BJ (cell line): ENCODE measurements at regions of chr10 and their contacts with region 1.

Region 1: DNA sequence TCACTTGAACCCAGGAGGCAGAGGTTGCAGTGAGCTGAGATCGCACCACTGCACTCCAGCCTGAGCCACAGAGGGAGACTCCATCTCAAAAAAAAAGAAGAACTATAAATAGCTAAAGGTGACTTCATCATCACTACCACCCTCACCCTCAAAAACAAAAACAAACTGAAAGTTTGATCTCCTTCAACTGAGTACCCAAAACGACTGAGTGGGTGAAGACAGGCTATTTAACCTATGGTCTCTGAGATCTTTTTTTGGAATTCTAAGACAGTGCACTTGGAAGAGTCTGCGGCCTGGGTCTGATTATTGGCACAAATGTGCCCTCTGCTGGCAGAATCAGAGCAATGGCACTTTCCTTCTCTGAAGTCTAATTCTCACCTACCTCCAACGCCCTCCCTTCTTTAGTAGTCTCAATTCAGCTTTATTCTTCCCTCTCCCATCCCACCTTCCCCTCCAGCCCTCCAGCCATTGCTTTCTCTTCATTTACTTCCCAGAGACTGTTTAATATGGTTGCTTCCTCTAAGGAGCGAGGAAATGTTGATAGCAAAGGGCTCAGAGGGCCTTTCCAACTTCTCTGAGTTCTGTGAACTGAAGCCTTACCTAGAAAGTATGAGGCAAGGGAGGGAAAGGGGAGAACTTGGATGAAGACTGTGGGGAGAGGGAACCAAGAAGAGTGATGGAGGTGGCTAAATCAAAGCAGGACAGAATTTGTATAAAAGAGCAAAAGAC is 2.9 kb upstream of the MYOZ1 start:
- DNase-seq: peak; percentile 15
- H3K4me3 ChIP-seq: no peak overlapping the region
- H3K27me3 ChIP-seq: no peaks in the 10 kb centered on the region; the same call in 1 of the 2 replicates
- CTCF ChIP-seq: peak; percentile 78

Region 2: DNA sequence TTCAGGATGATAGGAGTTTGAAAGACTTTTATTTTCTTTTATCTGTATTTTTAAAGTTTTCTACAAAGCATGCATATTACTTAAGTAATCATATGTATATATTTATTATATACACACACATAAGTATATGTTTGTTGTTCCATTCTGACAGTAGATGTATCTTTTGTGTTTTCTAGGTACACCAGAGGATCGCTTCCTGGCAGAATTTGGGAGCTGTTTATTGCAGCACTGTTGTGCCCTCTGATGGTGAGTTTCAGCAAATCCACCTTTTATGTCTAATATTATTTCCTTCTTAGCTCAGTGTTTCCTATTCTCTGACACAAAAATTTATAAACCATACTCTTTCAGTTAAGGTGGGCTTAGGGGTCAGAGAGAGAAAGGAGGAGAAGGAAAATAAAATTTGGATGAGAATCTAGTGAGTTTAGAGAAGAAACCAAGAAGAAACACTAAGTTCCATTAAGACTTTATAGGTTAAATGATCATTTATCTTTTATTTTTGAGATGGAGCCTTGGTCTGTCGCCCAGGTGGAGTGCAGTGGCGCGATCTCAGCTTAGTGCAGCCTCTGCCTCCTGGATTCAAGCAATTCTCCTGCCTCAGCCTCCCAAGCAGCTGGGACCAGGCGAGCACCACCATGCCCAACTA is 809.9 kb before region 1 on chr10:
- CTCF ChIA-PET with region 1: no interaction called
- POLR2A ChIA-PET with region 1: no interaction called
- DNase-seq: peak; percentile 4
- H3K4me3 ChIP-seq: no peak overlapping the region
- H3K27me3 ChIP-seq: no peaks in the 10 kb centered on the region
- CTCF ChIP-seq: peak; percentile 58

Region 3: GRCh38 chr10:73576178-73576889 is 67.8 kb before region 1 on chr10:
- CTCF ChIA-PET with region 1: interaction called, 7 read pairs
- POLR2A ChIA-PET with region 1: interaction called, 12 read pairs
- DNase-seq: peak; percentile 68
- H3K4me3 ChIP-seq: no peak overlapping the region
- H3K27me3 ChIP-seq: no peaks in the 10 kb centered on the region
- CTCF ChIP-seq: no peak

Region 4: DNA sequence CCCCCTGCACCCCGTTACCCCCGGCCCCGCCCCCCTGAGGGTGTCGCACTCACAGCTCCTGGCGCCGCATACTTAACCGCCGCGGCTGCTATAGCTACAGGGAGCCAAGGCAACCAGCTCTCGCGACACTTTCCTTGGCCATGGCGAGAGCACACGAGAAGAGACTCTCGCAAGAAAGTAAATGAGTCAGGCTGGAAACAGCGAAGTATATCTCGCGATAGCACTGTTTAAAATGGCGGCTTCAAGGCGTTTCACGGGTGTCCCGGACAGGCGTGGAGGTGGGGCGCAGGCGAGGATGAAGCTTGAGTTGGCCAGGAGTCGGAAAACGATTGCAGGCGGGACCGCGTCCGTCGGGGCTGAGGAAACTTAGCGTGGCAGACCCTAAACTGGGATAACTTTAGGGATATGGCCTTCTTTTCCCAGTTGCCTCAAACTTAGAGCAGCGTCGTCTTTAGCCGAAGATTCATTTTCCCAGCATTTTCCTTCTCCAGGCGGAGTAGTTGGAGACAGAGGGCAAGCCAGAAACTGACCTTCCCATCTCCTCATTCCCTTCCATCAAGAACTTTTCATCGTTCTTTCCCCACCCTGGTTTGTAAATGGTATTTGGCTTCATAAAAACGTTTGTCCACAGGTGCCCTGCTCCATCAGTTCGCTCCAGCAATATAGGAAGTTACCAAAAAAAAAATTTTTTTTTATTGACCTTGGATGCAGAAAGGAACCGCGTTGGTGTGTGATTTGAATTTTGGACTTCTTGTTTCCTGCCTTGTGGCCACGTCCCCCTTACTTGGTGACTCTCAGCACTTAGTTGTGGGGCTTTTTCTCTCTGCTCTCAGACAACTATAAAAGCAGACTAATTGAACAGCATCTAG is 18.1 kb before region 1 on chr10:
- CTCF ChIA-PET with region 1: interaction called, 23 read pairs
- POLR2A ChIA-PET with region 1: no interaction called
- DNase-seq: peak; percentile 93
- H3K4me3 ChIP-seq: peak overlapping the region; percentile 94
- H3K27me3 ChIP-seq: no peaks in the 10 kb centered on the region
- CTCF ChIP-seq: no peak